CD8-positive, alpha-beta T cell (primary cell): ENCODE measurements at regions of chr22 and their contacts with region 1.

Region 1: DNA sequence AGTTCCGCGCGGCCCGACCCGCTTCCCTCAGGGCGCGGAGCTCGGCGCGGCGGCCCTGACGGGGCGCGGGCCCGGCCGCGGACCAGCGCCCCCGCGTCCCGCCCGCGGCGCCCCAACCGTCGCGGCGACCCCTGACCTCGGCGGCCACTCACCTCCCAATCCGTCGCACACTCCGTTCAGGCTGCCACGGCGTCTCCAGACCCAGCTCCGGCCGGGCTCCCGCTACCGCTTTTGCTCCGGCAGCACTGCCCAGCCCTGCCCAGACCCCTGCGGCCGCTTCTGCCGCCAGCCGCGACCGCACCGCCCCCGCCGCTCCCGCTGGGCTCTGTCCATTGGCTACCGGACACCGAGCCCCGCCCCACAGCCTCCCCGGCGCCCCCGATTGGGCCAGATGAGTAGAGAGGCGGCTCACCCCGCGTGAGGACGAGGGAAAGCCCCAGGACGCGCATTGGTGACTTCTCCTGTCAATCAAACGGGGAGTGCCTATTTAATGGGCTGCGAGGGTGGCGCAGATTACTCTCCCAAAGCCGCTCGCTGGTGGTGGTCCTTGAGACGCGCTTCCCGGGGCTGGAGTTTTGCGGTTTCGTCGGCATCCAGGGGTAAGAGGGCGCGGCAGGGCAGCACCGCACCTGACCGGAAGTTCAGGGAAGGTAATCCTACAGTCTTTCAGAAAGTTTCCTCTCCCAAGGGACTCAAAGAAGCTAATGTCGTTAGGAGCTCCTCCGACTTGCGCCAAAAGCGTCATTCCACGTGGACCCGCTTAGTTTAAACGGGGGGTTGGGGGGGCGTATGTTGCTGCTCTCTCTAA is at the start of gene PACSIN2:
- DNase-seq: peak; percentile 98 to 99 (median 98)
- ATAC-seq: peak; percentile 98
- H3K4me3 ChIP-seq: peak within 1 kb of the TSS; percentile 79 to 85
- H3K4me3 Mint-ChIP-seq: peak within 1 kb of the TSS; percentile 98
- H3K27ac ChIP-seq: peak within 1 kb of the TSS; percentile 73 to 76
- H3K27ac Mint-ChIP-seq: peak within 1 kb of the TSS; percentile 97
- H3K4me1 ChIP-seq: peaks cover 14% of the 10 kb centered on the region
- H3K4me1 Mint-ChIP-seq: peaks cover 33% of the 10 kb centered on the region
- H3K27me3 ChIP-seq: no peaks in the 10 kb centered on the region
- H3K27me3 Mint-ChIP-seq: no peaks in the 10 kb centered on the region
- CTCF ChIP-seq: no peak
- total RNA-seq, gene PACSIN2: 16.8 to 18.5 TPM

Region 2: GRCh38 chr22:42649246-42650099 is 365.6 kb before region 1 on chr22 and contains the start of gene CYB5R3:
- CTCF ChIA-PET with region 1: no interaction called
- POLR2A ChIA-PET with region 1: no interaction called
- intact Hi-C with region 1: loop called in 1 of 2 experiments (anchors 10 kb)
- DNase-seq: peak; percentile 41 to 84 (median 71)
- ATAC-seq: peak; percentile 78
- H3K4me3 ChIP-seq: peak within 1 kb of the TSS; percentile 73 to 99
- H3K4me3 Mint-ChIP-seq: peak within 1 kb of the TSS; percentile 99
- H3K27ac ChIP-seq: peak within 1 kb of the TSS; percentile 81 to 90
- H3K27ac Mint-ChIP-seq: peak within 1 kb of the TSS; percentile 100
- H3K4me1 ChIP-seq: peaks cover 39% of the 10 kb centered on the region
- H3K4me1 Mint-ChIP-seq: peaks cover 31% of the 10 kb centered on the region
- H3K27me3 ChIP-seq: no peaks in the 10 kb centered on the region
- H3K27me3 Mint-ChIP-seq: peaks cover 2% of the 10 kb centered on the region
- CTCF ChIP-seq: no peak
- total RNA-seq, gene CYB5R3: 43.8 to 50.2 TPM

Region 3: GRCh38 chr22:42856865-42857704 is 158.0 kb before region 1 on chr22 and contains the start of gene ARFGAP3:
- CTCF ChIA-PET with region 1: no interaction called
- POLR2A ChIA-PET with region 1: interaction called, 5 read pairs
- intact Hi-C with region 1: loop called (anchors 1 kb)
- DNase-seq: peak; percentile 89 to 98 (median 94)
- ATAC-seq: peak; percentile 95
- H3K4me3 ChIP-seq: peak within 1 kb of the TSS; percentile 85 to 91
- H3K4me3 Mint-ChIP-seq: peak within 1 kb of the TSS; percentile 80
- H3K27ac ChIP-seq: peak within 1 kb of the TSS; percentile 90 to 92
- H3K27ac Mint-ChIP-seq: peak within 1 kb of the TSS; percentile 85
- H3K4me1 ChIP-seq: peaks cover 24% of the 10 kb centered on the region
- H3K4me1 Mint-ChIP-seq: peaks cover 11% of the 10 kb centered on the region
- H3K27me3 ChIP-seq: no peaks in the 10 kb centered on the region
- H3K27me3 Mint-ChIP-seq: no peaks in the 10 kb centered on the region
- CTCF ChIP-seq: no peak
- total RNA-seq, gene ARFGAP3: 25.4 TPM

Region 4: DNA sequence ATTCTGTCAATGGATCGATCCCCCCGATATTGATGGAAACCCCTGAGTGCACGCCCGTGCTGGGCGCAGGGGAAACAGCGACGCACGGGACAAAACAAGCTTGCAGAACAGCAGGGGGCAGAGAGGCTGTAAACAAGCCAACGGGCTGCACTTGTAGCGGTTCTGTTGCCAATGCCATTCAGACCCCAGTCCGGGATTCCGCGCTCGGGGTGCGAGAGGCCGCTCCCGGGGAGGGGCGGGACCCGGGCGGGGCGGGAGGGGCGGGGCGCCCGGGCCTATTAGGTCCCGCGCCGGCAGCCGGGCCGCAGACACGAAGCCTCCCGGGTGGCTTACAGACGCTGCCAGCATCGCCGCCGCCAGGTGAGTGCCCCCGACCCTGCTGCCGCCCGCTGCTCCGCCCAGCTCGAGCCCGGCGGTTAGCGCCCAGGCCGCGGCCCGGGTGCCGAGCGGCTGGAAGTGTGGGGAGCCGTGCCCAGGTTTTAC is 95.4 kb after region 1 on chr22 and contains the start of gene BIK:
- CTCF ChIA-PET with region 1: no interaction called
- POLR2A ChIA-PET with region 1: interaction called, 3 read pairs
- intact Hi-C with region 1: loop called in 1 of 2 experiments (anchors 1 kb)
- DNase-seq: peak in 8 of 9 experiments; percentile 31 to 69 (median 52)
- ATAC-seq: peak; percentile 49
- H3K4me3 ChIP-seq: peak within 1 kb of the TSS; percentile 51 to 82
- H3K4me3 Mint-ChIP-seq: peak within 1 kb of the TSS; percentile 87
- H3K27ac ChIP-seq: peak within 1 kb of the TSS in 1 of 2 experiments; percentile 20
- H3K27ac Mint-ChIP-seq: no peak within 1 kb of the TSS
- H3K4me1 ChIP-seq: peaks cover 7% of the 10 kb centered on the region
- H3K4me1 Mint-ChIP-seq: peaks cover 10% of the 10 kb centered on the region
- H3K27me3 ChIP-seq: no peaks in the 10 kb centered on the region
- H3K27me3 Mint-ChIP-seq: no peaks in the 10 kb centered on the region
- CTCF ChIP-seq: peak; percentile 12
- total RNA-seq, gene BIK: 5.3 to 6.1 TPM

Region 5: DNA sequence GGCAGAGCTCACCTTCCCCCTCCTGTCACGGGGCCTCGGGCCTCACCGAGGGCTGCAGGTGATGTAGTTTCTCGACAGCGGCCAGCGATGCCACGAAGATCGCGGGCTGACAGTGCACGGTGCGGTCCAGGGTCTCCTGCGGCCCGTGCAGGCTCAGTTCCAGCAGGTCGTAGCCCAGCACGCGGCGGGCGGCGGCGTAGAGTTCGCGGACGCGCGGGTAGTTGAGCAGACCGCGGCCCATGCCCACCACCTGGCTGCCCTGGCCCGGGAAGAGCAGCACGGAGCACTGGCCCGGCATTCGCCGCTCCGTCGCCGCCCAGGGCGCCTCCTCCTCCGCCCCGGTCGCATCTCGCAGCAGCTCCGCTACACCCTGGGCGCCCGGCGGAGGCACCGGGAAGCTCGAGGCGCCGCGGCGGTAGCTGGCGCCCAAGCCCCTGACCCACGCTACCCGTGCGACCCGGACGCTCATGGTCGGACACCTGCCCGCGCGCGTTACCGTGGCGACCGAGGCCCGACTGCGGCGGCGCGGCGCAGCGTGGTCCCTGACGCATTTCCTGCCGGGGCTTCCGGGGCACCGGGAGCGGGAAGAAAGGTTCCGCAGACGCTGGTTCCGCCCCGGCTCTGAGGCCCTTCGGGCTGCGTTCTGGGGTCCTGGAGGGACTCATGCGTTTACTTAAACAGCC is 127.9 kb after region 1 on chr22 and contains the start of gene MCAT:
- CTCF ChIA-PET with region 1: no interaction called
- POLR2A ChIA-PET with region 1: no interaction called
- intact Hi-C with region 1: loop called in 1 of 2 experiments (anchors 1 kb)
- DNase-seq: peak; percentile 62 to 89 (median 78)
- ATAC-seq: peak; percentile 82
- H3K4me3 ChIP-seq: peak within 1 kb of the TSS; percentile 68 to 88
- H3K4me3 Mint-ChIP-seq: peak within 1 kb of the TSS; percentile 87
- H3K27ac ChIP-seq: peak within 1 kb of the TSS; percentile 85 to 90
- H3K27ac Mint-ChIP-seq: peak within 1 kb of the TSS; percentile 88
- H3K4me1 ChIP-seq: peaks cover 7% of the 10 kb centered on the region
- H3K4me1 Mint-ChIP-seq: peaks cover 25% of the 10 kb centered on the region
- H3K27me3 ChIP-seq: no peaks in the 10 kb centered on the region
- H3K27me3 Mint-ChIP-seq: no peaks in the 10 kb centered on the region
- CTCF ChIP-seq: no peak
- total RNA-seq, gene MCAT: 5.9 to 7.8 TPM